CD4-positive, alpha-beta T cell (primary cell): ENCODE measurements at regions of chr10 and their contacts with region 1.

Region 1: GRCh38 chr10:11270135-11270857 is 252.6 kb downstream of the CELF2 start:
- DNase-seq: peak; percentile 56 to 82 (median 66)
- ATAC-seq: peak; percentile 75
- H3K4me3 ChIP-seq: no peak overlapping the region
- H3K4me3 Mint-ChIP-seq: peak overlapping the region; percentile 35
- H3K27ac ChIP-seq: peak overlapping the region in 1 of 2 donors; percentile 29
- H3K27ac Mint-ChIP-seq: peak overlapping the region; percentile 93
- H3K4me1 ChIP-seq: peaks cover 19% of the 10 kb centered on the region
- H3K4me1 Mint-ChIP-seq: peaks cover 78% of the 10 kb centered on the region
- H3K27me3 ChIP-seq: no peaks in the 10 kb centered on the region
- H3K27me3 Mint-ChIP-seq: no peaks in the 10 kb centered on the region
- CTCF ChIP-seq: peak; percentile 79

Region 2: DNA sequence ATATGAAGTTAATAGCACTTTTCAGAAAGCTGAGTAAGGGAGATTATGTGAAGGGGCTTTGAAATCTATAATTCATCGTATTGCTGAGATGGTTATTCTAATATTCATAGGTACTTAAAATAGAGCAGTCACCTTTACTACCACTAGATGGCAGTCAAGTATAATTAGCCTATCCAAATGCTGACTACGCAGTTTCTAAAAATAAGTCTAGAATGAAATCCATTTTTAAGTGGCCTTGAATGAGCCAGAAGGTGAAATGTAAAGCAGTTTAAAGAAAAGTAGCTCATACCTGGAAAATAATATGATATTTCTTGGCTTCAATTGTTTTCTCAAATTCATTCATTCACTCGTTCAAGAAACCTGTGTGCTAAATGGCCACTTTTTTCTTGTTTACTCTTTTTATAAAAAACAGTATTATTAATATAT is 1938.7 kb before region 1 on chr10:
- CTCF ChIA-PET with region 1: no interaction called
- POLR2A ChIA-PET with region 1: no interaction called
- intact Hi-C with region 1: loop called in 1 of 2 experiments (anchors 10 kb)
- DNase-seq: peak in 3 of 14 experiments; percentile 58 to 68 (median 66)
- ATAC-seq: peak; percentile 65
- H3K4me3 ChIP-seq: no peak overlapping the region
- H3K4me3 Mint-ChIP-seq: no peak overlapping the region
- H3K27ac ChIP-seq: no peak overlapping the region
- H3K27ac Mint-ChIP-seq: no peak overlapping the region
- H3K4me1 ChIP-seq: no peaks in the 10 kb centered on the region
- H3K4me1 Mint-ChIP-seq: no peaks in the 10 kb centered on the region
- H3K27me3 ChIP-seq: peaks cover 0 to 3% of the 10 kb centered on the region in 2 experiments
- H3K27me3 Mint-ChIP-seq: peaks cover 36% of the 10 kb centered on the region
- CTCF ChIP-seq: peak; percentile 93

Region 3: DNA sequence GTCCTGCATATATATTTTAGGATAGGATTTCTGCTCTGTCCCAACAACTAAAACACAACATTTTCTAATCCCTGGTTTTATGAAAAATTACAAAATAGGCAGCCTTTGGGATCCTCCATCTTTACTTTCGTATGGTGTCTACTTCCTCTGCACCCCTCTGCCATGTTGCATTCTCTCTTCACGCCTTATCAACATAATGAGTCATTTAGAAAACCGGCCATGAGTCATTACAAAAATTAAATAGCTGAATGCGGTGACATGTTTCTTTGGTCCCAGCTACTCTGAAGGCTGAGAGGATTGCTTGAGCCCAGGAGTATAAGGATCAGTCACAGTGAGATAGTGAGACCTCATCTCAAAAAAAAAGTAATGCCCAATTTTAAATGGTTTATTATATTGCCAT is 400.7 kb before region 1 on chr10:
- CTCF ChIA-PET with region 1: no interaction called
- POLR2A ChIA-PET with region 1: no interaction called
- intact Hi-C with region 1: no loop called
- DNase-seq: no peak
- ATAC-seq: no peak
- H3K4me3 ChIP-seq: no peak overlapping the region
- H3K4me3 Mint-ChIP-seq: no peak overlapping the region
- H3K27ac ChIP-seq: no peak overlapping the region
- H3K27ac Mint-ChIP-seq: no peak overlapping the region
- H3K4me1 ChIP-seq: no peaks in the 10 kb centered on the region
- H3K4me1 Mint-ChIP-seq: no peaks in the 10 kb centered on the region
- H3K27me3 ChIP-seq: peaks cover 3 to 12% of the 10 kb centered on the region in 2 experiments
- H3K27me3 Mint-ChIP-seq: peaks cover 21% of the 10 kb centered on the region
- CTCF ChIP-seq: no peak

Region 4: GRCh38 chr10:11463111-11463510 is 192.8 kb after region 1 on chr10:
- CTCF ChIA-PET with region 1: no interaction called
- POLR2A ChIA-PET with region 1: no interaction called
- intact Hi-C with region 1: no loop called
- DNase-seq: no peak
- ATAC-seq: no peak
- H3K4me3 ChIP-seq: no peak overlapping the region
- H3K4me3 Mint-ChIP-seq: no peak overlapping the region
- H3K27ac ChIP-seq: no peak overlapping the region
- H3K27ac Mint-ChIP-seq: no peak overlapping the region
- H3K4me1 ChIP-seq: no peaks in the 10 kb centered on the region
- H3K4me1 Mint-ChIP-seq: peaks cover 5% of the 10 kb centered on the region
- H3K27me3 ChIP-seq: no peaks in the 10 kb centered on the region
- H3K27me3 Mint-ChIP-seq: no peaks in the 10 kb centered on the region
- CTCF ChIP-seq: no peak